ENCODE measurements at regions of chr18 and their contacts with region 1.

Region 1: DNA sequence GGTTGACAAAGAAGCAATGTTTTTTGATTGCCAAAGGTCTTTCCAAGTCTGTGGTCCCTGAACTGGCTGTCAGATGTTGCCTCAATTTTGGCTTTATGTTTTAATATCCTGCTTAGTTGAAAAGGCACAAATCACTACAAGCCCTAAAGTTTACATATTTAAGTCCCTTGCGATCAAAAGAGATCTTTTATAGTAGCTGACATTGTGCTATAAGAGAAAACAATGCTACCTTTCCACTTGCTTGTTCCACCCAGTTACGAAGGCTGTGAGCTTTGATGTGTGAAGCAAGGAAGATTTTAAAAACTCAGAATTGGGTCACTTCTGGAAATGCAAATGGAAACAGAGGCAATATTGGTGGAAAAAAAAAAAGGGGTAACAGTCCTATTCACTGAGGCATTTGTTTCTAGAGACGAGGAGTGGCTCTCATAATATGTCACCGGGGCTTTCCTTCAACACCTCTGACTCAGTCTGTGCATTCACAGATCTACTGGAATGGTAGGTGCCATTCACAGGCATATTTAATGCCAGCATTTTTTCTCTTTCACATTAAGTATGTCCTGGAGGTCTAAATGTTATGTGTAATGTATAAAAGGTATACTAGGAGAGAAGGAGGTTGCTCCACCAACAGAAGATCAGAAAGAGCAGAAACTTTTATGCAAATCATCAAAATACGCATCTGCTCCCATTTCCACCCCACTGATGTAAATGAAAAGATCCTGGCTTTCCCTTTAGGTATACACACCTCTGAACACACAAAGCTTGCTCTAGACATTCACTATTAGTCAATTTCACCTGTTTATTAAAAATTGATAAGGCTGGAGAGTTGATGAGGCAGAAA is 91.8 kb downstream of the TGIF1 start:
- DNase-seq: no peak
- ATAC-seq: peak; percentile 83
- H3K4me3 Mint-ChIP-seq: peak overlapping the region; percentile 0
- H3K27ac Mint-ChIP-seq: peak overlapping the region; percentile 64
- H3K4me1 Mint-ChIP-seq: peaks cover 22% of the 10 kb centered on the region
- H3K27me3 Mint-ChIP-seq: no peaks in the 10 kb centered on the region
- CTCF ChIP-seq: no peak

Region 2: GRCh38 chr18:3183103-3183717 is 358.6 kb before region 1 on chr18:
- CTCF ChIA-PET with region 1: no interaction called
- POLR2A ChIA-PET with region 1: interaction called, 18 read pairs
- intact Hi-C with region 1: no loop called
- DNase-seq: no peak
- ATAC-seq: no peak
- H3K4me3 Mint-ChIP-seq: no peak overlapping the region
- H3K27ac Mint-ChIP-seq: no peak overlapping the region
- H3K4me1 Mint-ChIP-seq: peaks cover 24% of the 10 kb centered on the region
- H3K27me3 Mint-ChIP-seq: no peaks in the 10 kb centered on the region
- CTCF ChIP-seq: no peak

Region 3: DNA sequence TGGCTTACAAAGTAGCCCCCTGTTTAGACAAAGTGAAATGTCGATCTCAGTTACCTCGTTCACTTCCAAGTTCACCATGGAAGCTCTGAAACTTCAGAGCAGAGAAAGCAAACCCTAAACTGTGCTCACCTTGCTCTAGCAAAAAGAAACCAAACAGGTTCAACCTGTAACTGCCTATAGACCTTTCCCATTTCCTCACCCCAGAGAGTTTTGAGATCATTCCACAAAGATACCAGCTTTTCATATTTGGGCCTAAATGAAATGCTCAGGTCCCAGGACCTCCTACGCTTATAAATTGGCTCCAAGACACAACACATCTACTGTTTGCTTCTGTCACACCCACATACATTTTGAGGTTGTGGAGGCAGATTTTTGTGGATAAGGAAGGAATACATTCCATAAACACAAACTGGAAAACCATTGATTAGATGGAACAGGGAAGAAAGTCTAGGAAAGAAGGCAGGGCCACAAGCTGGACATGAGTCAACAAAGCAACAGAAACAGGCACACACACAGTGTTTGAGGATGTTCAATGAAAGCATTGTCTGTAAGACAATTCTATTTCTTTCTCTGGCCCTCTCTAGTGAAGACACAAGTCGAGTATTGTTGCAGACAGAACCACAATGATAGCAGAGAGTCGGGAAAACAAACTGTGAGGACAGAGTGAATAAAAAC is 144.6 kb before region 1 on chr18:
- CTCF ChIA-PET with region 1: no interaction called
- POLR2A ChIA-PET with region 1: no interaction called
- intact Hi-C with region 1: no loop called
- DNase-seq: no peak
- ATAC-seq: no peak
- H3K4me3 Mint-ChIP-seq: no peak overlapping the region
- H3K27ac Mint-ChIP-seq: no peak overlapping the region
- H3K4me1 Mint-ChIP-seq: peaks cover 31% of the 10 kb centered on the region
- H3K27me3 Mint-ChIP-seq: no peaks in the 10 kb centered on the region
- CTCF ChIP-seq: no peak

Region 4: GRCh38 chr18:3498698-3499471 is 42.9 kb before region 1 on chr18:
- CTCF ChIA-PET with region 1: no interaction called
- POLR2A ChIA-PET with region 1: interaction called, 4 read pairs
- intact Hi-C with region 1: loop called (anchors 1 kb)
- DNase-seq: peak; percentile 33
- ATAC-seq: peak; percentile 70
- H3K4me3 Mint-ChIP-seq: peak overlapping the region; percentile 80
- H3K27ac Mint-ChIP-seq: peak overlapping the region; percentile 25
- H3K4me1 Mint-ChIP-seq: peaks cover 32% of the 10 kb centered on the region
- H3K27me3 Mint-ChIP-seq: peaks cover 14% of the 10 kb centered on the region
- CTCF ChIP-seq: no peak

Region 5: GRCh38 chr18:3525870-3526420 is 15.8 kb before region 1 on chr18:
- CTCF ChIA-PET with region 1: interaction called, 3 read pairs
- POLR2A ChIA-PET with region 1: interaction called, 3 read pairs
- intact Hi-C with region 1: loop called (anchors 2 kb)
- DNase-seq: no peak
- ATAC-seq: peak; percentile 78
- H3K4me3 Mint-ChIP-seq: peak overlapping the region; percentile 62
- H3K27ac Mint-ChIP-seq: peak overlapping the region; percentile 20
- H3K4me1 Mint-ChIP-seq: peaks cover 18% of the 10 kb centered on the region
- H3K27me3 Mint-ChIP-seq: no peaks in the 10 kb centered on the region
- CTCF ChIP-seq: no peak

Region 6: DNA sequence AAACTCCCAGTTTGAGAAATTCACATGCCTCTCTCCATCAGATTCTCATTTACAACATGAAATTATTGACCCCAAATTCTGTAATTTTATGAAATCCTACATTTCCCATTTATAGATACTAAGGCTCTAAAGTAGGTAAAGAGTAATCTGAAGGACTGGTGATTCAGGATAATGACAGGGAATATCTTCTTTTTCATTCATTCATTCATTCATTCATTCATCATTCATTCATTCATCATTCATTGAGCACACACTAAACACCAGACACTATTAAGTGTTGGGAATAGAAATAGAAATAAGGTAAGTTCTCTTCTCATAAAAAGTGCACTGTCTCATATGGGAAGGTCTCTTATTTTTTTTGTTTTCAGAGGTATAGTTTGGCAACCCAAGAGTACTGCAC is 25.1 kb after region 1 on chr18:
- CTCF ChIA-PET with region 1: no interaction called
- POLR2A ChIA-PET with region 1: interaction called, 11 read pairs
- intact Hi-C with region 1: no loop called
- DNase-seq: no peak
- ATAC-seq: no peak
- H3K4me3 Mint-ChIP-seq: no peak overlapping the region
- H3K27ac Mint-ChIP-seq: no peak overlapping the region
- H3K4me1 Mint-ChIP-seq: no peaks in the 10 kb centered on the region
- H3K27me3 Mint-ChIP-seq: no peaks in the 10 kb centered on the region
- CTCF ChIP-seq: no peak

Measured in activated B cell treated with CpG ODN at 0.5 μM for 24 hours (primary cell).